Prostate gland (tissue), 2 donors: ENCODE measurements at regions of chr5 and their contacts with region 1.

Region 1: DNA sequence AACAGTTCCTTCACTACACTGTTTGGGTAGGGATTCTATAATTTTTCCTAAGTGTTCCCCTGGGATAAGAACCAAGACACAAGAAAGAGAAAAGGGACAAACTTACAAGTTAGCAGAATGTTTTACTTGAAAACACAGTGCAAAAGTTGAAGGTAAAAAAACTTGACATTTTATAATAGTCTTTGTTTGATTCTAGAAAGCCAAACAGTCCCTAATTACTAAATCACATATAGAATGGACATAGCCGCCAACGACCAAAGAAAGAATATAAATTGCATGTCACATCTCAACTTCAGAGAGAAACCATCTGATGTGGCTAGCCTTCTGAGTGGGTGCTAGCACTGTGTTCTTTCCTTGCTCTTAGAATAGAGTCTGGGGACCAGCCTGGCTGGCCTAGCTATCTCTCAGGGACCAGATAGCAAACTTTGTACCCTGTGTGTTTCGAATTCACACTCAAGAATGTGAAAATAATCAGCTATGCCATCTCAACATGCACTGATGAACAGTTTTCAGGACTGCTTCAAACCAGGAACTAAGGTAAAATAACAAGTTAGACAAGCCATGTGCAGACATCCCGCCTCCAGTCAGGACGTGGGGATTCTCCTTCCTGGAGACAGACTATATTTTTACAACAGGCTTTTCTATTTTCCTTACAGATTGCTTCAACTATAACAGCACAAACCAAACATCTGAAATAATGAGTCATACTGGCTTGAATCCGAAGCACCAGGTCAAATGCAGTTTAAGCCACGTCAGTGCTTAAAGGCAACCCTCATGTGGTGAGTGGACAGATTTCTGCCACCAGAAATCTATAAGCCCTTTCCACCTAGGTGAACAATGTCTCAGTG is 53.7 kb downstream of the LHFPL2 start:
- DNase-seq: peak; percentile 30
- H3K4me3 ChIP-seq: no peak overlapping the region
- H3K27ac ChIP-seq: peak overlapping the region; percentile 21 to 52
- H3K4me1 ChIP-seq: no peaks in the 10 kb centered on the region
- H3K27me3 ChIP-seq: no peaks in the 10 kb centered on the region
- CTCF ChIP-seq: no peak
- POLR2A ChIP-seq: no peak

Region 2: GRCh38 chr5:78627175-78627574 is 32.3 kb after region 1 on chr5:
- intact Hi-C with region 1: loop called (anchors 5 kb)
- DNase-seq: no peak
- H3K4me3 ChIP-seq: no peak overlapping the region
- H3K27ac ChIP-seq: peak overlapping the region in 1 of 2 donors; percentile 26
- H3K4me1 ChIP-seq: no peaks in the 10 kb centered on the region
- H3K27me3 ChIP-seq: no peaks in the 10 kb centered on the region
- CTCF ChIP-seq: peak in 1 of 4 experiments; percentile 27
- POLR2A ChIP-seq: no peak